Dendritic cell treated with granulocyte-macrophage colony-stimulating factor and Interleukin-4, amounts not matched to agents 40 ng/mL and 50 ng/mL, for 4 days (primary cell): ENCODE measurements at regions of chr22 and their contacts with region 1.

Region 1: GRCh38 chr22:19070397-19071169 is 51.6 kb downstream of the DGCR2 start:
- H3K4me3 Mint-ChIP-seq: no peak overlapping the region
- H3K27ac Mint-ChIP-seq: no peak overlapping the region
- H3K4me1 Mint-ChIP-seq: peaks cover 15% of the 10 kb centered on the region
- H3K27me3 Mint-ChIP-seq: no peaks in the 10 kb centered on the region

Region 2: GRCh38 chr22:19109198-19110067 is 38.9 kb after region 1 on chr22:
- intact Hi-C with region 1: loop called (anchors 5 kb)
- H3K4me3 Mint-ChIP-seq: peak overlapping the region; percentile 62
- H3K27ac Mint-ChIP-seq: peak overlapping the region; percentile 14
- H3K4me1 Mint-ChIP-seq: peaks cover 74% of the 10 kb centered on the region
- H3K27me3 Mint-ChIP-seq: no peaks in the 10 kb centered on the region